Sciatic nerve (tissue), 2 donors: ENCODE measurements at regions of chr2 and their contacts with region 1.

Region 1: GRCh38 chr2:219155054-219155644 is 5.5 kb downstream of the NHEJ1 start:
- DNase-seq: no peak
- ATAC-seq: peak; percentile 47

Region 2: DNA sequence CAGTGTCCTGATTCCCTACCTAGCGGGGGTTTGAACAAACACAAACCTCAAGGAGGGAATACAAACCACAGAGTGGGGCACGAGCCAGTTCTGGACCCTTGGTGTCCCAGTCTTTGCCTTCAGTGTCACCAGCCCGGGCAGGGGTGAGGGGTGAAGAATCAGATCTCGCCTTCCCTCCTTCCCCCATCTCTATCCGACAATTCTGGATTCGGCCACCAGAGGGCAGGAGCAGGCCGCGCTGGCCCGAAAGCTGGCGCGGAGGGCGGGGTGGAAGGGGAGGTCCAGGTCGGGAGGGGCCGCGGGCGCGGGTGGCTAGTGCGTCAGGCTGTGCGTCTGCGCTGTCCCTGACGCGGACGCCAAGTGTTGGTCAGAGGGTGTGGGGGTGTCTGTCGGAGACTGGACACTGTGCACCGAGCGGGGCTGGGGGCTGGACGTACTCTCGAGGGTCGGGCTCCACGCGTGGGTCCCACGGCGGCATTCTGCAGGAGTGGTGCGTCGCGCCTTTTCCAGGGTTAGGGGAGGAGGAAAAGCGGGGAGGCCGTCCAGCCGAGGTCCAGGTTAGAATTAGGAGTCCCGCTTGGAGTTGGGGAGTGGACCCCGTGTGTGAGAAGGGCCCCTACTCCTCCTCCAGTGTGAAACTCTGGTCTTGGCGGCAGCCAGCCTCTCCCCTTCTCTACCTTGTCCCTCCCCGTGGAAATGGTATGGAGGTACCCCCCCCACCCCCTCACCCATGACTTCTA is 159.0 kb before region 1 on chr2:
- intact Hi-C with region 1: loop called (anchors 10 kb)
- DNase-seq: peak; percentile 90
- ATAC-seq: peak; percentile 96

Region 3: GRCh38 chr2:219218732-219219701 is 63.9 kb after region 1 on chr2 and contains the start of gene ABCB6:
- intact Hi-C with region 1: no loop called
- DNase-seq: peak; percentile 99
- ATAC-seq: peak; percentile 96
- total RNA-seq, gene ABCB6: 32.6 TPM